Prostate gland (tissue), 2 donors: ENCODE measurements at regions of chr2 and their contacts with region 1.

Region 1: DNA sequence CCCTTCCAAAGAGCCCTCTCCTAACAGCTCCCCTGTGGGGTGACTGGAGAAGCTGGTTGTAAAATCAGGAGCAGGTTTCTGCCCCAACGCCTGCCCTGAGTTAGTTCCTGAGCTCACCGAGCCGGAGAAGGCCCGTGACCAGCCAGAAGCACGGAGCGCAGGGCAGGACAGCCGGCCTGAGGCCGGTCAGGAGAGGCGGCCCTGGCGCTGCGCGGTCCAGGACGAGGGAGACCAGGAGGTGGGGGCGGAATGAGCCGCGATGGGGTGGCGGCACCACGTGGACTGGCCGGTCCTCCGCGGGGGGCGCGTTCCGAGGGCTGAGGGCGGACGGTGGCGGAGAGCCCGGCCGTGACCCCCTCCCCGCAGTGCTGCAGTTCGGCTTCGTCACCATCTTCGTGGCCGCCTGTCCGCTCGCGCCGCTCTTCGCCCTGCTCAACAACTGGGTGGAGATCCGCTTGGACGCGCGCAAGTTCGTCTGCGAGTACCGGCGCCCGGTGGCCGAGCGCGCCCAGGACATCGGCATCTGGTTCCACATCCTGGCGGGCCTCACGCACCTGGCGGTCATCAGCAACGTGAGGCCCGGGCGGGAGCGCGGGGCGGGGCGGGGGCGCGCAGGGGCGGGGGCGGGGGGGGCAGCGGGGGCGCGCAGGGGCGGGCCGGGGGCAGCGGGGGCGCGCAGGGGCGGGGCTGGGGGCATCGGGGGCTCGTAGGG is 29.0 kb downstream of the ANO7 start:
- DNase-seq: peak; percentile 67
- H3K4me3 ChIP-seq: peak overlapping the region; percentile 28 to 41
- H3K27ac ChIP-seq: peak overlapping the region; percentile 91
- H3K4me1 ChIP-seq: peaks cover 2% of the 10 kb centered on the region
- H3K27me3 ChIP-seq: no peaks in the 10 kb centered on the region
- CTCF ChIP-seq: peak in 2 of 4 experiments; percentile 26 to 51
- POLR2A ChIP-seq: peak; percentile 24

Region 2: GRCh38 chr2:241102239-241102803 is 115.2 kb before region 1 on chr2 and contains the start of gene MTERF4:
- intact Hi-C with region 1: loop called (anchors 10 kb)
- DNase-seq: peak; percentile 89
- H3K4me3 ChIP-seq: peak within 1 kb of the TSS; percentile 84 to 88
- H3K27ac ChIP-seq: peak within 1 kb of the TSS; percentile 89 to 91
- H3K4me1 ChIP-seq: no peaks in the 10 kb centered on the region
- H3K27me3 ChIP-seq: no peaks in the 10 kb centered on the region
- CTCF ChIP-seq: peak in 1 of 4 experiments; percentile 18
- POLR2A ChIP-seq: peak; percentile 69
- total RNA-seq, gene MTERF4: 91.3 to 98.5 TPM

Region 3: DNA sequence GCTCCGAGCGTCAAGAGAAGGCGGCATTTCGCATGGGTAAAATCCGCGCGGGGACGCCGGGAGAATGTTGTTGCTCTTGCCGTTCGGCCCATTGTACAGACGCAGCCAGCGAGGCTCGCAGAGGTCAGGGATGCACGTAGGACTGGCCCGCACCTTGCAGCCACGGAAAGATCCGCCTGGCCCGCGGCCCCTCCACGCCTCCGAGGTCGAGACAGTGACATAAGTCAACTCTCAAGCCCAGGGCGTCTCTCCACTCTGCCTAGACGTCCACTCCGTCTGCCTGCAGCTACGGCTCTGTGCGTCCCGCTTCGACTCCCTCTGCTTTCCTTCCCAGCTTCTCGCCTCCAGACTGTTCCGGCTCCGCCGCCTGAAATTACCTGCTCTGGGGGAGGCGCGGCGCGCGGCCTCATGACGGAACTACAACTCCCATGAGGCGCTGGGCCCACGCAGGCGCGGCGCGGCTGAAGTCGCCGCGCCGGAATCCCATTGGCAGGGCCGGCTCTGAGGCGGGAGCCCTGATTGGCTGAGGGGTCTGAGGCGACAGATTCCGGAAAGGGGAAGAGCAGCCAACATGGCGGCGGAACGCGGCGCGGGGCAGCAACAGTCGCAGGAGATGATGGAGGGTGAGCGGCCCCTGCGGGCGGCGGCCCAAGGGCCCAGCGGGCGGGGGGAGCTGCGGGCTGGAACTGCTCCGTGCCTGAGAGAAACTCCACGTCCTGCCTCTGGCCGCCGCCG is 67.4 kb before region 1 on chr2 and contains the start of gene PPP1R7:
- intact Hi-C with region 1: loop called (anchors 5 kb)
- DNase-seq: peak; percentile 95
- H3K4me3 ChIP-seq: peak within 1 kb of the TSS; percentile 67 to 98
- H3K27ac ChIP-seq: peak within 1 kb of the TSS; percentile 76 to 80
- H3K4me1 ChIP-seq: peaks cover 5% of the 10 kb centered on the region
- H3K27me3 ChIP-seq: no peaks in the 10 kb centered on the region
- CTCF ChIP-seq: peak in 2 of 4 experiments; percentile 23 to 25
- POLR2A ChIP-seq: peak; percentile 66
- total RNA-seq, gene PPP1R7: 50.0 to 91.3 TPM

Region 4: GRCh38 chr2:241232736-241233554 is 15.5 kb after region 1 on chr2:
- intact Hi-C with region 1: no loop called
- DNase-seq: no peak
- H3K4me3 ChIP-seq: no peak overlapping the region
- H3K27ac ChIP-seq: no peak overlapping the region
- H3K4me1 ChIP-seq: no peaks in the 10 kb centered on the region
- H3K27me3 ChIP-seq: no peaks in the 10 kb centered on the region
- CTCF ChIP-seq: no peak
- POLR2A ChIP-seq: no peak

Region 5: GRCh38 chr2:241410739-241411176 is 193.3 kb after region 1 on chr2:
- intact Hi-C with region 1: no loop called
- DNase-seq: no peak
- H3K4me3 ChIP-seq: no peak overlapping the region
- H3K27ac ChIP-seq: no peak overlapping the region
- H3K4me1 ChIP-seq: no peaks in the 10 kb centered on the region
- H3K27me3 ChIP-seq: no peaks in the 10 kb centered on the region
- CTCF ChIP-seq: no peak
- POLR2A ChIP-seq: no peak